Activated B cell treated with CpG ODN at 0.5 μM for 24 hours (primary cell): ENCODE measurements at regions of chr2 and their contacts with region 1.

Region 1: DNA sequence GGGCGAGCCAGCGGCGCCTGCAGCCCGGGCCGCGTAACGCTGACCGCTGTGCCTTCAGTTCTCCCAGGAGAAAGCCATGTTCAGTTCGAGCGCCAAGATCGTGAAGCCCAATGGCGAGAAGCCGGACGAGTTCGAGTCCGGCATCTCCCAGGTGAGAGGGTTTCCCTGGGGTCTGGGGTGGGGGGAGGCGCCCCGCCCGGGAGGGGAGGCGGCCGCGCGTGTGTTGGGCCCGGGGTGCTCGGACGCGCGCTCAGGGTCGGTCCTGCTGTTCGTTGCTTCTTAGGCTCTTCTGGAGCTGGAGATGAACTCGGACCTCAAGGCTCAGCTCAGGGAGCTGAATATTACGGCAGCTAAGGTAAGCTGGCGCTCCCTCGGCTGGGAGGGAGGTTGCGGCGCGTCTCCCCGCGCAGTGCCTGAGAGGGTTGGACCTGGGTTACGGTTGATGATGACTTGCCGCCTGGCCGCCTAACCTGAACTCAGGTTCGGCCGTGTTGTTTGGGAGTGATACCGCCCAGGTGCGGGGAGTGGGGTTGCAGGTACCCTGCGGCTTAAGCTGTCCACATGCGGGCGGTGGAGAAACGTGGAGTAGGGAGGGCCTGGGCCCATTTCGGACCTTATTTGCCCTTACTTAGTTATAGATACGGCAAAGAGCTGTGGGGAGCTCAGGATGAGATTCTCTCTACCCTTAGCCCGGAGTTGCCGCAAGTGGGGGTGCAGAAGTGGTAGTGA is 638 bp downstream of the RPS7 start:
- DNase-seq: no peak
- ATAC-seq: peak; percentile 43
- H3K4me3 Mint-ChIP-seq: peak overlapping the region; percentile 91
- H3K27ac Mint-ChIP-seq: peak overlapping the region; percentile 91
- H3K4me1 Mint-ChIP-seq: peaks cover 45% of the 10 kb centered on the region
- H3K27me3 Mint-ChIP-seq: no peaks in the 10 kb centered on the region
- CTCF ChIP-seq: no peak

Region 2: DNA sequence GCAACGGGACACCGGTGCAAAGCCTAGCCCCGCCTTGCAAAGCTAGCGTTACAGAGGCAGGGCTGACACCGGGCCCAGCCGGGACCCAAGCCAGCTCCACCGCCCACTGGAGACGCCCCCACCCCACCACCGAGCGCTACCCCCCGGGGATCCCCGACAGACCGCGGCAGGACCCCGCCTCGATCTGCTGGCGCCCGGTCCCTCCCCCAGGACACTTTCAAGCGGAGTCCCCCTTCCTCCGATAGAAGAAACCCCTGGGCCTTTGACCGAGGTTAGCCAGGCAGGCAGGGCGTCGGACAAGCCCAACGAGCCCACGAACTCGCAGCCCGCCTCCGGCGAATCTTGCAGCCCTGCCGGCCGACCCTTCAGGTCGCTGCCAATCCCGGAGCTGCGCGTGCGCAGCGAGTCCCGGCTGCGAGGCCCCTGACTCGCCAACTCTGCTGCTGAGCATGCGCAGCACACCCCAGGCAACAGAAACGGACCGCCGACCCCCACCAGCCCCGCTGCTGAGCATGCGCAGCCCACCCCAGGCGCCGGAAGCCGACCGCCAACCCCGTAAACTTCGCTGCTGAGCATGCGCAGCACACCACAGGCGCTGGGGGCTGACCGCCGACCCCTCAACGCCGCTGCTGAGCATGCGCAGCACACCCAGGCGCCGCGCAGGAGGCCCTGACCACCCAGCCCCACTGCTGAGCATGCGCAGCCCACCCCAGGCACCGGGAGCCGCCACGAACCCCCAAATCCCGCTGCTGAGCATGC is 57.0 kb before region 1 on chr2:
- CTCF ChIA-PET with region 1: no interaction called
- POLR2A ChIA-PET with region 1: interaction called, 22 read pairs
- intact Hi-C with region 1: loop called (anchors 1 kb)
- DNase-seq: peak; percentile 98
- ATAC-seq: peak; percentile 76
- H3K4me3 Mint-ChIP-seq: peak overlapping the region; percentile 85
- H3K27ac Mint-ChIP-seq: peak overlapping the region; percentile 91
- H3K4me1 Mint-ChIP-seq: peaks cover 38% of the 10 kb centered on the region
- H3K27me3 Mint-ChIP-seq: no peaks in the 10 kb centered on the region
- CTCF ChIP-seq: no peak

Region 3: GRCh38 chr2:3558205-3559014 is 17.3 kb before region 1 on chr2 and contains the start of gene RNASEH1:
- CTCF ChIA-PET with region 1: interaction called, 3 read pairs
- POLR2A ChIA-PET with region 1: interaction called, 128 read pairs
- intact Hi-C with region 1: loop called (anchors 1 kb)
- DNase-seq: peak; percentile 99
- ATAC-seq: peak; percentile 95
- H3K4me3 Mint-ChIP-seq: peak within 1 kb of the TSS; percentile 91
- H3K27ac Mint-ChIP-seq: peak within 1 kb of the TSS; percentile 97
- H3K4me1 Mint-ChIP-seq: peaks cover 45% of the 10 kb centered on the region
- H3K27me3 Mint-ChIP-seq: no peaks in the 10 kb centered on the region
- CTCF ChIP-seq: no peak
- total RNA-seq, gene RNASEH1: 27.4 and 28.5 TPM in 2 replicates

Region 4: GRCh38 chr2:3563521-3563976 is 12.1 kb before region 1 on chr2:
- CTCF ChIA-PET with region 1: interaction called, 3 read pairs
- POLR2A ChIA-PET with region 1: interaction called, 128 read pairs
- intact Hi-C with region 1: loop called (anchors 1 kb)
- DNase-seq: no peak
- ATAC-seq: peak; percentile 41
- H3K4me3 Mint-ChIP-seq: peak overlapping the region; percentile 75
- H3K27ac Mint-ChIP-seq: peak overlapping the region; percentile 94
- H3K4me1 Mint-ChIP-seq: peaks cover 55% of the 10 kb centered on the region
- H3K27me3 Mint-ChIP-seq: no peaks in the 10 kb centered on the region
- CTCF ChIP-seq: no peak